ENCODE measurements at regions of chr3 and their contacts with region 1.

Region 1: DNA sequence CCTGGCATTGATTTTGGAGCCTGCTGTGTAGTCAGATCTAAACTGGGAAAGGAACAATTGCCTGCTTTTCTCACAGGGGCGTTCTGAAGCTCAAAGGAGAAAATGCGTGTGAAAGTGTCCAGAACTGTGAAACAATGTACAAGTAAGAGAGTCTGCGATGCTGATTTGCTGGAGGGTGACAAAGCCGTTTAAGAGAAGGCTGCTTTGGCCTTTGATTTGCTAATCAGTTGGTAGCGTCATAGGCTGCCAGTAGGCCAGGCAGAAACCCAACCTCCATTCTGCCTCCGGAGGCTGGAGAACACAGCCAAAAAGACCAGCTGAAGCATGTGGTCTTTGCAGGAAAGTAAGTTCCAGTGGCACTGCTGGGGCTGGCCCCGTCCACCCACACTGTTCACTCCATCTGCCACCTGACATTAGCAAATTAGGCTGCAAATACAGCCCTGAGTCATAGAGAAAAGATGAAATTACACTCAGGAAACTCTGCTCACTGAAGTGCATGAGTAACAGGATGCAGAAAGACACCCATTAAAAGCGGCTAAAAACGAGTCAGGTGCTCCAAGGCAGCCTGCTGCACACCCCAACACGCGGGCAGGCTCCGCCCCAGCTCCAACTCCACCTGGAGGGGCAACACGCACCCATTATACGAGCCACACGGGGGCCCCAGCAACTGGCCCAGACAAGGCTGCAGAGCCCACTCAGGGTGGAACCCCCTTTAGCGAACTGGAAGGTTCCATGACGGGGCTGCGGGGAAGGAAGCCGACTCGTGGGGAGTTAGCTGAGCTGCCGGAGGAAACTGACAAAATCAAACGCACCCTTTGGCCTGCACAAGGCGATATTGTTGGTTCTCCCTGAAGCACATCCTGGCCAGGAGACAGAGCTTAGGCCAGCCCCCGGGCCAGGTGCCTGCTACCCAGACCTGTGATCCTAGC is 31.6 kb downstream of the ZDHHC19 start:
- DNase-seq: peak; percentile 33
- H3K4me3 ChIP-seq: no peak overlapping the region
- CTCF ChIP-seq: no peak

Region 2: DNA sequence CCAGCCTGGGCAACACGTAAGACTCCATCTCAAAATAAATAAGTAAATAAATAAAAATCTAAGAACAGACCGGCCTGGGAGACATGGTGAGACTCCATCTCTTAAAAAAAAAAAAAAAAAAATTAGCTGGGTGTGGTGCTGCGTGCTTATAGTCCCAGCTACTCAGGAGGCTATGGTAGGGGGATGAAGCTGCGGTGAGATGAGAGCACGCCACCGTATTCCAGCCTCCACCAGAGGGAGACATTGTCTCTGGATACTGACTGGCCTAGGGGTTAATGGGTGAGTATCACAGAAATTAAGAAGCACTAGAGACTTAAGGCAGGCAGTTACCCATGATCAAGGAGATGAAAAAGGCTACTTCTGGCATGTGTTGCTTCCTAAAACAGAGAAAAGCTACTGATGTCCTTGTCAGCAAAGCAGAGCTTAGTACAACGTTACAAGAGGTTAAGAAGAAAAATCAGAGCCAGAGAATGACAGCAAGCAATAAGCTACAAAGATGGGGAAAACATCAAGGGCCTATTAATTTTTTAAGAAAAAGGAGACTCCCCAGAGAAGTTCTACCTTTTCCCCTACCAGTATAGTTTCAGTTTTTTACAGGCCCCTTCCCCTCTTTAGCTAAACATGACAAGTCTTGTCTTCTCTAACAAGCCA is 106.3 kb before region 1 on chr3:
- in situ Hi-C with region 1: loop called (anchors 5 kb)
- DNase-seq: peak; percentile 40
- H3K4me3 ChIP-seq: no peak overlapping the region
- CTCF ChIP-seq: peak; percentile 93

Region 3: GRCh38 chr3:196136026-196136984 is 43.3 kb before region 1 on chr3:
- in situ Hi-C with region 1: no loop called
- DNase-seq: no peak
- H3K4me3 ChIP-seq: no peak overlapping the region
- CTCF ChIP-seq: no peak

Region 4: DNA sequence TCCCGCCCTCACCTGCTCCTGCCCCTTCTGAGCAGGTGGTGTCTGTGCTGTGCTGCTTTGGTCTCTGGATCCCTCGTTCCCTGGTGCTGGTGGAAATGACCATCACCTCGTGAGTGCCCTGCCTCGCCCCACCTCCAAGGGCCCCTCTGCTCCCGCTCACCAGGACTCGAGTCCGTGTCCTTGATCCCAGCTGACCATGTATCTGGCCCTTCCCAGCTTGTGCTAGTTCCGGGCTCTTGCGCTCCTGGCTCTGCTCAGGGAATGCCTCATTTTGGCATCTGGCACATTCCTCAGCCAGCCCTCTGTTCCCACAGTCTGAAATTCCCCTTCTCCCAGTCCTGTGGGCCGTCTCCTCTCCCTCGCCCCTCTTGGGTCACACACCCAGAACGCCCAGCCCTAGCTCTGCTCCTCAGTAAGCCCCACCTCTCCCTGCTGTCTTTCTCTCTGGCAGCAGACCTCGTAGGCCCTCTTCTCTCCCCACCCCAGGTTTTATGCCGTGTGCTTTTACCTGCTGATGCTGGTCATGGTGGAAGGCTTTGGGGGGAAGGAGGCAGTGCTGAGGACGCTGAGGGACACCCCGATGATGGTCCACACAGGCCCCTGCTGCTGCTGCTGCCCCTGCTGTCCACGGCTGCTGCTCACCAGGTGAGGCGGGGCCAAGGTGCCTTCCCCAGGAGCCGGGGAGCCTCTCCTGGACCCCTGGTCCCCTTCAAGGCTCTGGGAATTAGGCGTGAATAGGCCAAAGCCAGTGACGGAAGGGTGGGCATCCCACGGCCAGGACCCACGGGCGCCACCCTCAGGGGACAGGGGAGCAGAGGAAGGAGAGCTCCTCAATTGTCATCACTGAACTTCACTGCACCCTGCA is 48.2 kb after region 1 on chr3:
- in situ Hi-C with region 1: loop called (anchors 10 kb)
- DNase-seq: no peak
- H3K4me3 ChIP-seq: no peak overlapping the region
- CTCF ChIP-seq: no peak

Measured in astrocyte of the cerebellum (primary cell).